ENCODE measurements at regions of chr7 and their contacts with region 1.

Region 1: GRCh38 chr7:39746103-39746819 is 122.9 kb downstream of the RALA start:
- DNase-seq: peak; percentile 87
- H3K4me3 ChIP-seq: no peak overlapping the region
- H3K27ac ChIP-seq: no peak overlapping the region
- H3K4me1 ChIP-seq: no peaks in the 10 kb centered on the region
- H3K27me3 ChIP-seq: no peaks in the 10 kb centered on the region
- CTCF ChIP-seq: peak; percentile 42 to 68 (median 66)
- POLR2A ChIP-seq: no peak

Region 2: GRCh38 chr7:39580149-39580874 is 165.9 kb before region 1 on chr7:
- intact Hi-C with region 1: loop called (anchors 5 kb)
- DNase-seq: peak; percentile 88
- H3K4me3 ChIP-seq: no peak overlapping the region
- H3K27ac ChIP-seq: no peak overlapping the region
- H3K4me1 ChIP-seq: no peaks in the 10 kb centered on the region
- H3K27me3 ChIP-seq: no peaks in the 10 kb centered on the region
- CTCF ChIP-seq: peak; percentile 80 to 85 (median 82)
- POLR2A ChIP-seq: no peak

Region 3: GRCh38 chr7:39667341-39667923 is 78.8 kb before region 1 on chr7:
- intact Hi-C with region 1: no loop called
- DNase-seq: no peak
- H3K4me3 ChIP-seq: no peak overlapping the region
- H3K27ac ChIP-seq: no peak overlapping the region
- H3K4me1 ChIP-seq: no peaks in the 10 kb centered on the region
- H3K27me3 ChIP-seq: no peaks in the 10 kb centered on the region
- CTCF ChIP-seq: no peak
- POLR2A ChIP-seq: no peak